Posterior cingulate gyrus (tissue), 11 donors: ENCODE measurements at regions of chr16 and their contacts with region 1.

Region 1: GRCh38 chr16:69565671-69566239 is at the start of gene NFAT5:
- DNase-seq: peak; percentile 86 to 98 (median 90)

Region 2: DNA sequence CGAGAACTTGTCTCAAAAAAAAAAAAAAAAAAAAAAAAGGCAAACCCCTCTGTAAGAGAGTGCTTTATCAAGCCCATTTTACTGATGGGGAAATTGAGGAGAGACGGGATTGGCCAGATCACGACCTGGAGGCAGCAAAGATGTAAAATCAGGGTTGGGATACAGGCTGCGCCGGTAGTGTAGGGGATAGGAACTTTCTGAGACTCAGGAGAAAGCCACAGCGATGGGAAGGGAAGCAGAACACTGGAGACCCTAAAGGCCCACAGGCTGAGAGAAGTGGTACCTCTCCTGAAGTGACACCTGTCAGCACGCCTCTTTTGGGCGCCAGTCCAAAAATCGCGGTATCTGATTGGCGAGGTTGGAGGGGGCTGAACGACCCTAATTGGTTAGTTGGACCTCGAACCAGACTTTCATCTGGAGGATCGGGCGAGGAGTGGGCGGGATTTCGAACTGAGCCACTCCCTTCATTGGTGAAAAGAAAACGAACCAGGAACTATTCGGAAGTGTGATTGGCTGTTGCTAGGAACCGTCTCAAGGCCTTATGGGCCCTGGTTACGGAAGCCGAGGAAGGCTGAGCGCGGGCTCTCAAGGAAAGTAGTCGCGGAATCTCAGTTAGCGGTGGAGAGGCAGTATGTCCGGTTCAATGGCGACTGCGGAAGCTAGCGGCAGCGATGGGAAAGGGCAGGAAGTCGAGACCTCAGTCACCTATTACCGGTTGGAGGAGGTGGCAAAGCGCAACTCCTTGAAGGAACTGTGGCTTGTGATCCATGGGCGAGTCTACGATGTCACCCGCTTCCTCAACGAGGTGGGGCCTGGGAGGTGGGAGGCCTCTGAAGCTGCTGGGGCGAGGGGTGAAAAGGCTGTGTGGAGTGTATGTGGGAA is 141.5 kb before region 1 on chr16 and contains the start of gene CYB5B:
- intact Hi-C with region 1: loop called (anchors 10 kb)
- DNase-seq: peak; percentile 83 to 98 (median 91)

Region 3: DNA sequence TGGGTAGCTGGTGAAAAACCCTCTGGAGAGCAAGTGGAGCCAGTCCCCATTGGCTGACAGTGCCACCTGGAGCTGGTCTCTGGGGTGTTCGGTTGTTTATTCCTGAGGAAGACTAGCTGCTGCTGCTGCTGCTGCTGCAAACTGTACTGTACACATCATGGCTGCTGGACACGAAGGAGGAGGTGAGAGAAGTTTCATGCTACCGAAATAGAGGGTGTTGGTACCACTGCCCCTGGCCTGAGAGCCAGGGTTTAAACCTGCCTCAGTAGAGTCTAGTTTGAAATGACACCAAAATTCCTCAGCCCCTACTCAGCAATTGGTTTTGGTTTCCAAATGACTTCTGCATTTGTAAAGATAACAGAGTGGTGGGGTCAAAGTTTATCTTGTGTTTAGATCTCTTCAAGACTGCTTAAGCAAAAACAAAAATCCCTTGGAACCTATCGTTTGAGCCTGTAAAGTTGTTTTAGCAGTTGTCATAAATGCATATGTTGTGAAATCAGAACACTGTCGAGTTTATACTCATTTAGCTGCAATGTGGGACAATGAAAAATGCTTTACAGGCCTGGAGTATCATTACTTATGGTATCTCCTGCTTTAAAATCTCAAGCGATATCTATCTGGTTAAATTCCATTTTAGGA is 100.6 kb before region 1 on chr16:
- intact Hi-C with region 1: loop called (anchors 10 kb)
- DNase-seq: peak in 1 of 10 donors; percentile 27